MCF 10A (cell line): ENCODE measurements at regions of chr12 and their contacts with region 1.

Region 1: GRCh38 chr12:28172434-28173030 is 17.7 kb upstream of the CCDC91 start:
- DNase-seq: peak; percentile 78
- H3K4me3 Mint-ChIP-seq: no peak overlapping the region
- H3K27ac Mint-ChIP-seq: no peak overlapping the region
- H3K4me1 Mint-ChIP-seq: peaks cover 10% of the 10 kb centered on the region
- H3K27me3 Mint-ChIP-seq: no peaks in the 10 kb centered on the region
- CTCF ChIP-seq: peak; percentile 63

Region 2: GRCh38 chr12:27840244-27840999 is 332.1 kb before region 1 on chr12:
- CTCF ChIA-PET with region 1: no interaction called
- POLR2A ChIA-PET with region 1: no interaction called
- intact Hi-C with region 1: loop called (anchors 10 kb)
- DNase-seq: peak; percentile 7
- H3K4me3 Mint-ChIP-seq: no peak overlapping the region
- H3K27ac Mint-ChIP-seq: no peak overlapping the region
- H3K4me1 Mint-ChIP-seq: peaks cover 4% of the 10 kb centered on the region
- H3K27me3 Mint-ChIP-seq: no peaks in the 10 kb centered on the region
- CTCF ChIP-seq: peak; percentile 37

Region 3: DNA sequence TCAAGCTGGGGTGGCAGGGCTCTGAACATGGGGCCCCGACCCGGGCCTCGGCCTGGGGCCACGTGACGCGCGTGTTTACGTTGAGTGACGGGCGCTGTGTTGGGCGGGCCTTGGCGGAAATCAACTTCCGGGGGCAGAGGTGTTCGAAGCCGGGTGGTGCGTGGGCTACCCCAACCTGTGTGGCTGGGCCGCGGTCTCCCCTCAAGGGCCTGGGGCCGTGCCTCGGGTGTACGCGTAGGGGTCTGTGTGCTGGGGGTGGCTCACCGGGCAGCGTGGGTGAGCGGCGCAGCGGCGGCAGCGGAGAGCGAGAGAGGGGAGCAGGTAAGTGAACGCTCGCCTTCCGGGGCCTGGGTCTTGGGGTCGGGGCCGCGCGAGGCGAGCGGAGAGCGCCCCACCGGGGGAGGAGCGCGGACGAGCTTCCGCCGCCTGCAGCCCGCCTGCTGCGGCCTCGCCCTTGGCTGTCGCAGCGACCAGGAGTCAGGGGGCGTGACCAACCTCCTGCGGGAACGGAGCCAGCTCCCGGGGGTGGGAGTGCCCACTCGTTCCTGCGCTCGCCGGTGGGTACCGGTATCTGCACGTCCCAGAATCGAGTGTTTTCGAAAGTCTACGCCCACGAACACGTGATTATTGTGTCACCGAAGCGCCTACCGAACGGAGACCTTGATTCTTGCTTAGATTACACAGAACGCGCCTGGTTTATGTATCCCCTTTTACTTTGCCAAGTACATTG is 18.0 kb after region 1 on chr12 and contains the start of gene CCDC91:
- CTCF ChIA-PET with region 1: interaction called, 3 read pairs
- POLR2A ChIA-PET with region 1: interaction called, 16 read pairs
- intact Hi-C with region 1: no loop called
- DNase-seq: peak; percentile 84
- H3K4me3 Mint-ChIP-seq: peak within 1 kb of the TSS; percentile 94
- H3K27ac Mint-ChIP-seq: peak within 1 kb of the TSS; percentile 98
- H3K4me1 Mint-ChIP-seq: peaks cover 15% of the 10 kb centered on the region
- H3K27me3 Mint-ChIP-seq: no peaks in the 10 kb centered on the region
- CTCF ChIP-seq: no peak
- total RNA-seq, gene CCDC91: 35.9 and 38.6 TPM in 2 replicates

Region 4: DNA sequence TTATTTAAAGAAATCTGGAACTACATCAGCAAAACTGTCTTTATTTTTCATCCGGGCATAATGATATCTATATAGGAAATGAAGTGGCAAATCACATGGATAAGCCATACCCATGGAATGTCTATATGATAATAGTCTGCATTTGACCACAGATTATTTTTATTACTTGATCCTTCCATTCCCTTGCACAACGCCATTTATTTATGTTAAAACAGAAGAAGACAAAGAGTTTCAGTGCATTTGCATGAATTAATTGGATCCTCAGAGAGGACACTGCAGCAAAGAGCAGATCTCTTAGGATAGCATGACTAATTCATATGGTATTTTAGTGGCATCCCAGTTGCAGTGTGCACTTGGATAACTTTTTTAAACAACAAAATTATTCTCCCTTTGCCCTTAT is 362.7 kb after region 1 on chr12:
- CTCF ChIA-PET with region 1: no interaction called
- POLR2A ChIA-PET with region 1: no interaction called
- intact Hi-C with region 1: loop called (anchors 10 kb)
- DNase-seq: peak; percentile 31
- H3K4me3 Mint-ChIP-seq: no peak overlapping the region
- H3K27ac Mint-ChIP-seq: no peak overlapping the region
- H3K4me1 Mint-ChIP-seq: peaks cover 7% of the 10 kb centered on the region
- H3K27me3 Mint-ChIP-seq: no peaks in the 10 kb centered on the region
- CTCF ChIP-seq: no peak

Region 5: DNA sequence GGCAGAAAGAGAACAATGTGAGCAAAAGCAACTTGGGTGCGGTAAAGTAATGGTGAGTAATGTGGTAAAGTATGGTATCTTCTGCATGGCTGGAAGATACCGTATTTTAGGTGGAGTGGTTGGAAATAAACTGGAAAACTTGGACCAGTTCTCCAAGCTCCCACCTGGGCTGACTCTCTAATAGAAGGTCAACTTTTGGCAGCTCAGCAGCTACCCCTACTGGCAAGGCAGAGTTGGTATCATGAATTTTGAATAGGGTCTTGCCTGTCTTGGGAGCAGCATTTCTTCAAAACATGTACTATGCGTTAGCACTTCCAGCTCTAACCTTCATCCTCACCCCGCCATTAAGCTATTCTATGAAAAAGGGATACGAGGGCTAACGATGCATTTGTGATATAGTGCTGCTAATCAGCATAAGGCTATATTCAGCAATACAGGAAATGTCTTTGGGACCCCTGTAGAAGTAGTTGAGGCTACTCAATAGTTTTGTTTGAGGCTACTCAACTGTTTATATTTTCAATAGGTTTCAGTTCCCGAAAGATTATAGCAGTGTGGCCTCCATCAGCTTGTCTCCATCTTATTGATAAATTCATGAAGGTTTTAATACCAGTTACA is 700.2 kb after region 1 on chr12:
- CTCF ChIA-PET with region 1: interaction called, 4 read pairs
- POLR2A ChIA-PET with region 1: interaction called, 3 read pairs
- intact Hi-C with region 1: loop called (anchors 5 kb)
- DNase-seq: peak; percentile 69
- H3K4me3 Mint-ChIP-seq: no peak overlapping the region
- H3K27ac Mint-ChIP-seq: no peak overlapping the region
- H3K4me1 Mint-ChIP-seq: peaks cover 21% of the 10 kb centered on the region
- H3K27me3 Mint-ChIP-seq: no peaks in the 10 kb centered on the region
- CTCF ChIP-seq: peak; percentile 77